HEK293 (cell line): ENCODE measurements at regions of chr2 and their contacts with region 1.

Region 1: GRCh38 chr2:45607701-45608100 is 3.4 kb downstream of the SRBD1 start:
- H3K4me3 ChIP-seq: no peak overlapping the region
- H3K27ac ChIP-seq: no peak overlapping the region
- H3K4me1 ChIP-seq: peaks cover 13% of the 10 kb centered on the region
- CTCF ChIP-seq: 0 out of 2 replicates have a peak, but pooled peaks have one; percentile 17

Region 2: GRCh38 chr2:45585267-45585861 is 22.3 kb before region 1 on chr2:
- CTCF ChIA-PET with region 1: interaction called, 27 read pairs
- POLR2A ChIA-PET with region 1: no interaction called
- H3K4me3 ChIP-seq: no peak overlapping the region
- H3K27ac ChIP-seq: no peak overlapping the region
- H3K4me1 ChIP-seq: no peaks in the 10 kb centered on the region
- CTCF ChIP-seq: no peak

Region 3: GRCh38 chr2:45595721-45596435 is 11.8 kb before region 1 on chr2:
- CTCF ChIA-PET with region 1: interaction called, 15 read pairs
- POLR2A ChIA-PET with region 1: no interaction called
- H3K4me3 ChIP-seq: no peak overlapping the region
- H3K27ac ChIP-seq: no peak overlapping the region
- H3K4me1 ChIP-seq: no peaks in the 10 kb centered on the region
- CTCF ChIP-seq: no peak